ENCODE measurements at regions of chr3 and their contacts with region 1.

Region 1: GRCh38 chr3:123993818-123994217 is 1.9 kb upstream of the ROPN1 start:
- DNase-seq: no peak
- H3K4me3 ChIP-seq: no peak overlapping the region
- H3K27ac ChIP-seq: no peak overlapping the region
- H3K4me1 ChIP-seq: no peaks in the 10 kb centered on the region
- H3K27me3 ChIP-seq: peaks cover 7% of the 10 kb centered on the region
- CTCF ChIP-seq: no peak

Region 2: GRCh38 chr3:123314359-123315270 is 679.2 kb before region 1 on chr3:
- CTCF ChIA-PET with region 1: no interaction called
- dilution Hi-C with region 1: no loop called
- in situ Hi-C with region 1: no loop called
- intact Hi-C with region 1: loop called (anchors 10 kb)
- DNase-seq: no peak
- H3K4me3 ChIP-seq: no peak overlapping the region
- H3K27ac ChIP-seq: no peak overlapping the region
- H3K4me1 ChIP-seq: no peaks in the 10 kb centered on the region
- H3K27me3 ChIP-seq: peaks cover 6% of the 10 kb centered on the region
- CTCF ChIP-seq: no peak

Region 3: DNA sequence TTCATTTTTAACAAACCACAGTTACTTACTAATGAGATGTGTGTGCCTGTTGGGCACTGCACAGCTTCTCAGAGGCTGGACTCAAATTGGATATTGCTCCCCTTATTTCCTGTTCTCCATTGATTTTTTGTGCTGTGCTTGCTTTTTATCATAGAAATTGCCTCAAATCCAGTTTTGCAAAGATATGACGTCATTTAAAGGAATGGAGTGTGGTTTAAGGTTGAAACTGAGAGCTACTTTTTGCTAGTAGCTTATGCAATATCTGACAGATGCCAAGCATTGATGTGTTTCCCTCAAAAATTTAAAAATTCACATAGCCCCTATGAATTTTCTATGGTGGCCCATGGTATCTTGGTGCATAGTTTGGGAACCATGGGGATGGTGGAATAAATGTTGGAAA is 65.8 kb after region 1 on chr3:
- CTCF ChIA-PET with region 1: no interaction called
- dilution Hi-C with region 1: loop called (anchors 5 kb)
- in situ Hi-C with region 1: no loop called
- intact Hi-C with region 1: no loop called
- DNase-seq: no peak
- H3K4me3 ChIP-seq: no peak overlapping the region
- H3K27ac ChIP-seq: no peak overlapping the region
- H3K4me1 ChIP-seq: no peaks in the 10 kb centered on the region
- H3K27me3 ChIP-seq: peaks cover 15% of the 10 kb centered on the region
- CTCF ChIP-seq: no peak

Region 4: DNA sequence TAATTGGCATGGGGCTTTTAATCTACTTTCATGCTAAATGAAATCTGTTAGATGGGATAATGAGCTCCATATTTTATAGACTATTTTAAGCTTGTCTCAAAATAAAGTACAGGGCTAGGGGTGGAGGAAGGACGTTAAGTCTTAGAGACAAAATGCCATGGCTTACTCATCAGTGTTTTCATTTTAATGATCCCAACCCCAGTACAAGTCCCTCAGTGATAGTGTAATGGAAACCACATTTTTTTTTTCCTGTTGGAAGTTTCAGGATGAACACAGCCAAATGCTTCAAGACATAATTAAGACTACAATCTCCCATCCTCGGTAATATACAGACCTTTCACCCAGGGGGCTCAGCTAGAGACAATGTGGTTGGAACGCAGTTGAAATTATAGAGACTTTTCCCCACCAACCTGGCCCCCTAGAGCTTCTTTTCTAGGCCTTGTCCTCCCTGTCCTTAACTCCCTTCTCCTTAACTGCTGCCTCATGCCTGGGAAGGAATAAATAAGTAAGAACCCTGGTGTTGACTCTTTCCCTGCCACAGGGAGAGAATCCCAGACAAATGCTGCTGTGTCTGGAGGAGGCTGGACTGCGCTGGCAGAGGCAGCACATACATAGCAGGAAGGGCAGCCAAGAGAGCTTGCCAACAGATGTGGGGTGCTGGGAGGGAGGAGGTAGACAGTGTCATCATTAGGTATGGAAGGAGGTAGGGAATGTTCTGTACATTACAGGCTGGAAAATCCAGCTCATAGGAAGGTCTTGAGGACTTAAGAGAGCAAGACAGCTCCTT is 113.5 kb after region 1 on chr3:
- CTCF ChIA-PET with region 1: no interaction called
- dilution Hi-C with region 1: no loop called
- in situ Hi-C with region 1: no loop called
- intact Hi-C with region 1: no loop called
- DNase-seq: no peak
- H3K4me3 ChIP-seq: no peak overlapping the region
- H3K27ac ChIP-seq: no peak overlapping the region
- H3K4me1 ChIP-seq: no peaks in the 10 kb centered on the region
- H3K27me3 ChIP-seq: peaks cover 5% of the 10 kb centered on the region
- CTCF ChIP-seq: no peak

Measured in mammary epithelial cell (primary cell).